ENCODE measurements at regions of chr16 and their contacts with region 1.

Region 1: DNA sequence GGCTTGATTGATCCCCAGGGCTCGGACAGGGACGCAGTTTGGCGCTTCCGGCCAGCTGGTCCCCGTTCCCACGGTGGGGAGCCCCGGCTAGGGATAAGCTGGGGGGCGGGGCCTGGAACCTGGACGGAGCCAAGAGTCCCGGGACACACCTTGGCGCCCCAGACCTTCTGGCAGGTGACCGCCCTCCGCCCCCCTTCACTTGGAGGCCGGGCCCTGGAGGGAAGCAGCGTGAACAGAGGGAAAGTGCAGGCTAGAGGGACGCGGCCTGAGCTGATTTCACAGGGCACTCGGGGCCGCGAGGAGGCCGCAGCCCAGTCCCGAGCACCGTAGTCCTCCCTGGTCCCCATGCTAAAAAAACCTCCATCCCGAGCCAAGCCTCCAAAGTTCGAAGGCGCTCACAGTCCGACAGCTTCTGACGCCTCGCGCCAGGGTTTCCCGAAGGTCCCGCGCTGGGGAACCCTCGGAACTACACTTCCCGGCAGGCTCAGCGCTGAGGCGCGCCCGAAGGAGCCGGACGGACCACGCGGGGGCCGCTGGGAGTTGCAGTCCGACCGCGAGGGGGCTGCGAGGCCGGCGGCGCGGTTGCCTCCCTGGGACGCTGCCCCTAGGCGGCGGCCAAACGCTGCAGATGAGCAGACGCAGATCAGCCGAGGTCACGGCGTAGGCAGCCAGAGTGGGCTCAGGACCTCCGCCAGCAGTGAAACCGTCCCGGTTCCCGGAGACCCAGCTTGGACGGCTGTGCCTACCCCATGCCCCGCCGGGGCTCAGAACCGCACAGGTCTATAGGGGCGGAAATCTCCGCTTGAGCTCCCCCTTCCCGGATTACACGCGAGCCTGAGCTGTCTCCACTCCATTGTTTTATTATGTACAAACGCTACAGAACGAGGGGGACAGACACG is at the start of gene TBX6:
- DNase-seq: peak; percentile 97
- ATAC-seq: peak; percentile 77
- H3K4me3 Mint-ChIP-seq: peak within 1 kb of the TSS; percentile 86
- H3K27ac Mint-ChIP-seq: peak within 1 kb of the TSS; percentile 96
- H3K4me1 Mint-ChIP-seq: peaks cover 47% of the 10 kb centered on the region
- H3K27me3 Mint-ChIP-seq: no peaks in the 10 kb centered on the region
- total RNA-seq, gene TBX6: 2.4 to 3.0 TPM

Region 2: GRCh38 chr16:30018731-30019158 is 73.0 kb before region 1 on chr16:
- POLR2A ChIA-PET with region 1: no interaction called
- DNase-seq: no peak
- ATAC-seq: no peak
- H3K4me3 Mint-ChIP-seq: no peak overlapping the region
- H3K27ac Mint-ChIP-seq: no peak overlapping the region
- H3K4me1 Mint-ChIP-seq: peaks cover 7% of the 10 kb centered on the region
- H3K27me3 Mint-ChIP-seq: peaks cover 5% of the 10 kb centered on the region

Region 3: DNA sequence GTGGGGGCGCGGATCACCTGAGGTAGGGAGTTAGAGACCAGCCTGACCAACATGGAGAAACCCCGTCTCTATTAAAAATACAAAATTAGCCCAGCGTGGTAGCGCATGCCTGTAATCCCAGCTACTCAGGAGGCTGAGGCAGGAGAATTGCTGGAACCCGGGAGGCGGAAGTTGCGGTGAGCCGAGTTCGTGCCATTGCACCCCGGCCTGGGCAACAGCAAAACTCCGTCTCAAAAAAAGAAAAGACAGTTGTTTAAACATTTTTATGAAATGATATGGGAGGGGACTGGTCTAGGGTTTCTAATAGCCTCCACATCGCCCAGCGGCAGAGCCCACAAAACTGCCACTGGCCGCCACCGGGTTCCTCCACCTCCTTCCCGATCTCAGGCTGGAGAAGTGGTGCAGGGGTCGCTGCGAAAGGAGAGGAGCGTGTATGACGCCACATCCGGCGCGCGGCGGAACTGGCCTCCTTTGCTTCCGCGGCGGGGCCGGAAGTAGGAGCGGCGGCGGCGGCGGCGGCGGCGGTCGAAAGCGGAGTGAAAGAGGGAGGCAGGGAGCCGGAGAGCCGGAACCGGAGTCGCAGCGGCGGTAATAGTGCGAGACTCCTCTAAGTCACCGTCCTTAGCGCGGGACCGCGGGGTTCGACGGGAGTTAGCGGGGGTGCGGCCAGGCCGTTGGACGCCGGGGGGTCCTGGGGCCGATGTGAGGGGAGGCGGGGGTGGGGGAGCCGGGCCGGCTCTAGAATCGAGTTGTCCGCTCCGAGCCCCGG is 16.0 kb before region 1 on chr16 and contains the start of gene PPP4C:
- POLR2A ChIA-PET with region 1: interaction called, 36 read pairs
- DNase-seq: peak; percentile 96
- ATAC-seq: peak; percentile 85
- H3K4me3 Mint-ChIP-seq: peak within 1 kb of the TSS; percentile 88
- H3K27ac Mint-ChIP-seq: peak within 1 kb of the TSS; percentile 93
- H3K4me1 Mint-ChIP-seq: peaks cover 29% of the 10 kb centered on the region
- H3K27me3 Mint-ChIP-seq: no peaks in the 10 kb centered on the region
- total RNA-seq, gene PPP4C: 123 to 133 TPM

Measured in activated naive CD8-positive, alpha-beta T cell treated with anti-CD3 and anti-CD28 coated beads, Interleukin-2, amount 10 ng/mL, durations not matched to agents 7 days and 5 days (primary cell).